PC-3 (cell line): ENCODE measurements at regions of chr1 and their contacts with region 1.

Region 1: DNA sequence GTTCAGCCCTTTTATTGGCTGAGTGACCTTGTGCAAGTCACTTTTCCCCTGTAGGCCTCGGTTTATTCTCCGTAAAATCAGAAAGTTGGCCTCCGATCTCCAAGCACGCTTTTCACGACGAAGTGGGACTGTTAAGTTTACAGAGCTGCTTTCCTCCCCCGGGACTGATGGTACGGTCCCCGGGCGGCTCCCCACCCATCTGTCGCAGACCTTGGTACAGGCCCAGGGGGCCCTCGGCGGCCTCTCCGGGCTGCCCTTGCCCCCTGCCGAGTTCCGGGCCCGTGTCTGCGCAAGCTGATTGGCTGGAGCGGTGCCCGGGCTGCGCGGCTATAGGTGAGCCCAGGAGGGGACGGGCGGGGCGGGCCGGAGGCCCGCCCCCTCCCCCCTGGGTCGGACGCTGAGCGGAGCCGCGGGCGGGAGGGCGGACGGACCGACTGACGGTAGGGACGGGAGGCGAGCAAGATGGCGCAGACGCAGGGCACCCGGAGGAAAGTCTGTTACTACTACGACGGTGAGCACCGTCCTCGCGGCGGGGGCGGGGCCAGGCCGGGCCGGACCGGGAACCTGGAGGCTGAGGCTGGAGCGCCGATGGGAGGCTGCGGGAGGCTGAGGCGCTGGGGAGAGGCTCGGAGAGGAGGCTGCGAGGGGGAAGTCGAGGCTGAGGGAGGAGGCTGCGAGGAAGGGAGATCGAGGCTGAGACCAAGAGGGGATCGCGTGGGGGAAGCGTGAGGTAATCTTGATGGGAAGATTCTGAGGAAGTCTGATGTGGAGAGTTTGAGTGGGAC is at the start of gene HDAC1:
- DNase-seq: peak; percentile 98
- ATAC-seq: peak; percentile 86
- H3K4me3 ChIP-seq: peak within 1 kb of the TSS; percentile 88
- H3K27ac ChIP-seq: peak within 1 kb of the TSS; percentile 81
- H3K4me1 ChIP-seq: peaks cover 30% of the 10 kb centered on the region
- H3K27me3 ChIP-seq: no peaks in the 10 kb centered on the region
- CTCF ChIP-seq: no peak
- total RNA-seq, gene HDAC1: 182 and 184 TPM in 2 replicates

Region 2: GRCh38 chr1:32240140-32240951 is 51.6 kb before region 1 on chr1:
- CTCF ChIA-PET with region 1: interaction called, 3 read pairs
- POLR2A ChIA-PET with region 1: interaction called, 4 read pairs
- intact Hi-C with region 1: loop called (anchors 2 kb)
- DNase-seq: peak; percentile 75
- ATAC-seq: peak; percentile 63
- H3K4me3 ChIP-seq: peak overlapping the region; percentile 81
- H3K27ac ChIP-seq: peak overlapping the region; percentile 29
- H3K4me1 ChIP-seq: peaks cover 31% of the 10 kb centered on the region
- H3K27me3 ChIP-seq: no peaks in the 10 kb centered on the region
- CTCF ChIP-seq: peak; percentile 51

Region 3: DNA sequence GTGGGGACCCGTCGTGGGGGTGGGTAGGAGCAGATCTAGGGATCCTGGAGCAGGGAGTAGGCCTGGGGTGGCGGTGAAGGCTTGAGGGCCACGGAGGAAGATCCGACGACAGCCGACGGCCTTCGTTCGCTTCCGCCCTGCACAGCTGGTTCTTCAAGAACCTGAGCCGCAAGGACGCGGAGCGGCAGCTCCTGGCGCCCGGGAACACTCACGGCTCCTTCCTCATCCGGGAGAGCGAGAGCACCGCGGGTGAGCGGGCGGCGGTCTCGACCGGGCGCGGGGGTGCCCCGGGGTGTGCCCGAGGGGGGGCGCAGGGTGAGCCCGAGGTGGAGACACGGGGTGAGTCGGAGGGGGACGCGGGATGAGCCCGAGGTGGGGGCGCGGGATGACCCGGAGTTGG is 16.5 kb before region 1 on chr1:
- CTCF ChIA-PET with region 1: interaction called, 19 read pairs
- POLR2A ChIA-PET with region 1: no interaction called
- intact Hi-C with region 1: no loop called
- DNase-seq: no peak
- ATAC-seq: no peak
- H3K4me3 ChIP-seq: no peak overlapping the region
- H3K27ac ChIP-seq: no peak overlapping the region
- H3K4me1 ChIP-seq: peaks cover 13% of the 10 kb centered on the region
- H3K27me3 ChIP-seq: no peaks in the 10 kb centered on the region
- CTCF ChIP-seq: no peak

Region 4: GRCh38 chr1:32307323-32307722 is 15.4 kb after region 1 on chr1:
- CTCF ChIA-PET with region 1: no interaction called
- POLR2A ChIA-PET with region 1: interaction called, 16 read pairs
- intact Hi-C with region 1: no loop called
- DNase-seq: peak; percentile 32
- ATAC-seq: peak; percentile 63
- H3K4me3 ChIP-seq: no peak overlapping the region
- H3K27ac ChIP-seq: no peak overlapping the region
- H3K4me1 ChIP-seq: peaks cover 13% of the 10 kb centered on the region
- H3K27me3 ChIP-seq: no peaks in the 10 kb centered on the region
- CTCF ChIP-seq: no peak

Region 5: DNA sequence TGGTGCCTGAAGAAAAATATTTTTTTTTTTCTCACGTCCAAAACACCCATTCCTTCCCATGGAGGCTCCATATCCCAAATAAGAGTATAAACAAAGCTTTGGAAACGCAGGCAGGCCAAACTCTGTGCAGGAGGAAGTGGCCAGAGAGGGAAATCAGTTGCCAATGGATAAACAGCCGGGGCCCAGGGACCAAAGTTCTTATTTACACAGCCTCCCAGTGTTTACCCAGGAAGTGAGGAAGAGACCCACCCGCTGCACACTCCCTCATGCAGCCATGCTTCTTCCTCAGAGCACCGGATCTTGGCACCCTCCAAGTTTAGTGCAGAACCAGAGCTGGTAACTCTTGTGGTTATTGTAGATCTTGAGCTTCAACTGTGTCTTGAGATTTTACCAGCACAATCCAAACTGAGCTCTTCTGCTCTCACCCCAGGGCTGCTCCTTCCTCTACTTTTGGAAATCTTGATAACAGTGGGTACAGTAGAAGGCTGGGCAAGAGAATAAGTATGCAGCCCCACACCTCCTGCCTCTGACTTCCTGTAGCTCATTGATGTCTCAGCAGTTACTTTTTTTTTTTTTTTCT is 29.9 kb after region 1 on chr1:
- CTCF ChIA-PET with region 1: interaction called, 6 read pairs
- POLR2A ChIA-PET with region 1: interaction called, 12 read pairs
- intact Hi-C with region 1: no loop called
- DNase-seq: peak; percentile 90
- ATAC-seq: peak; percentile 95
- H3K4me3 ChIP-seq: peak overlapping the region; percentile 36
- H3K27ac ChIP-seq: peak overlapping the region; percentile 91
- H3K4me1 ChIP-seq: peaks cover 23% of the 10 kb centered on the region
- H3K27me3 ChIP-seq: no peaks in the 10 kb centered on the region
- CTCF ChIP-seq: no peak

Region 6: GRCh38 chr1:32335790-32336590 is 44.1 kb after region 1 on chr1 and contains the start of gene MARCKSL1:
- CTCF ChIA-PET with region 1: interaction called, 3 read pairs
- POLR2A ChIA-PET with region 1: interaction called, 11 read pairs
- intact Hi-C with region 1: no loop called
- DNase-seq: peak; percentile 70
- ATAC-seq: peak; percentile 44
- H3K4me3 ChIP-seq: peak within 1 kb of the TSS; percentile 86
- H3K27ac ChIP-seq: no peak within 1 kb of the TSS
- H3K4me1 ChIP-seq: peaks cover 67% of the 10 kb centered on the region
- H3K27me3 ChIP-seq: no peaks in the 10 kb centered on the region
- CTCF ChIP-seq: no peak
- total RNA-seq, gene MARCKSL1: 159 and 176 TPM in 2 replicates

Region 7: DNA sequence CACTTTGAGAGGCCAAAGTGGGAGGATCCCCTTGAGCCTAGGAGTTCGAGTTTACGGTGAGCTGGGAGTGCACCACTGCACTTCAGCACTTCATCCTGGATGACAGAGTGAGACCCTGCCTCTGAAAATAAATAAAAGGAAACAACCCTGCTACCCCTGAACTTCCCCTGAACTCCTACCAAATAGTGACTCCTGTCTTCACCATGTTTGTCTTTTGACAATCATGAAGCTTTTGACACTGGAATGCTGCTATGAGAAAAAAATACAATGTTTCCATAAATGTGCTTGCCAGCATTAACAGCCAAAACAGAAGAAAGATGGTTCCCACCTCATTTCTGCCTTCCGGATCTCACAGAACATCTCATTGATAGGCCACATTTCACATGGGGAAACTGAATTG is 257.7 kb after region 1 on chr1:
- CTCF ChIA-PET with region 1: no interaction called
- POLR2A ChIA-PET with region 1: no interaction called
- intact Hi-C with region 1: no loop called
- DNase-seq: no peak
- ATAC-seq: no peak
- H3K4me3 ChIP-seq: no peak overlapping the region
- H3K27ac ChIP-seq: no peak overlapping the region
- H3K4me1 ChIP-seq: no peaks in the 10 kb centered on the region
- H3K27me3 ChIP-seq: no peaks in the 10 kb centered on the region
- CTCF ChIP-seq: no peak